Transverse colon (tissue), 4 donors: ENCODE measurements at regions of chr3 and their contacts with region 1.

Region 1: DNA sequence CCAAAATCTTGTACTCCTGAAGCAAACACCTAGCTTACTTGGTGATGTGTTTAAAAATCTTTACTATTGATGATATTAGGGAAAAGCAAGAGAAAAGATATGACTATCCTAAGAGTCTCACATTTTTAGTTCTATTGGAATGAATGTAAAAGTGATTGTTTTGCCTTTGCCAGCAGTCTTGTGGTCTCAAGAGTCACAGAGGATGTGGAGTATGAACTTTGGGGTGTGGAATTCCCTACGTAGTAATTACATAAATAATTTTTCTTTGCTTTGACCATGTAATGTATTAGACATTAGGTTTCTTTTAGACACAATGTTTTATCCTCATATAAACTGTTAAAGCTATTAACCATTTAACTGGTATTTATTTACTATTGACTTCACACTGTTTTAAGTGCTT is 387.6 kb downstream of the NAALADL2 start:
- DNase-seq: no peak
- H3K4me3 ChIP-seq: no peak overlapping the region
- H3K27ac ChIP-seq: no peak overlapping the region
- H3K4me1 ChIP-seq: no peaks in the 10 kb centered on the region
- H3K27me3 ChIP-seq: no peaks in the 10 kb centered on the region
- CTCF ChIP-seq: no peak
- EP300 ChIP-seq: no peak
- POLR2A ChIP-seq: no peak

Region 2: DNA sequence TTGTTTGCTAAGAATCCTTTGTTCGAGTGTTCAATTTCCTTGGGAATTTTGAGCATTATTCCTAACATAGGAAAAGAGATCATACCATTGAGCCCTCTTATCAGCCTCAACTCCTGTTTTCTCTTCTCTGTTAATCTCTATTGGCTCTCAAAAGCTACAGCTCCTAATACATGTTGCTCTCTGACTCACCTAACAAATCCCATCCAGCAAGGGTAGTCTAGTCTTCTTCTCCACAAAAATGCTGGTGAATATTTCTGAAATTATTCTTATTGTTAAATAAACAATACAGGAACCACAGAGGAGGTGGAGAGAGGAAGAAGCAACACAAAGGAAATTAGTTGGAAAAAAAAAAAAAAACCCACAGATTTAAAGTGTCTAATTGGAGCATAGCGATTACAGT is 713.5 kb before region 1 on chr3:
- in situ Hi-C with region 1: no loop called
- intact Hi-C with region 1: loop called (anchors 5 kb)
- DNase-seq: no peak
- H3K4me3 ChIP-seq: no peak overlapping the region
- H3K27ac ChIP-seq: no peak overlapping the region
- H3K4me1 ChIP-seq: no peaks in the 10 kb centered on the region
- H3K27me3 ChIP-seq: no peaks in the 10 kb centered on the region
- CTCF ChIP-seq: no peak
- EP300 ChIP-seq: no peak
- POLR2A ChIP-seq: no peak